A673 (cell line): ENCODE measurements at regions of chr12 and their contacts with region 1.

Region 1: DNA sequence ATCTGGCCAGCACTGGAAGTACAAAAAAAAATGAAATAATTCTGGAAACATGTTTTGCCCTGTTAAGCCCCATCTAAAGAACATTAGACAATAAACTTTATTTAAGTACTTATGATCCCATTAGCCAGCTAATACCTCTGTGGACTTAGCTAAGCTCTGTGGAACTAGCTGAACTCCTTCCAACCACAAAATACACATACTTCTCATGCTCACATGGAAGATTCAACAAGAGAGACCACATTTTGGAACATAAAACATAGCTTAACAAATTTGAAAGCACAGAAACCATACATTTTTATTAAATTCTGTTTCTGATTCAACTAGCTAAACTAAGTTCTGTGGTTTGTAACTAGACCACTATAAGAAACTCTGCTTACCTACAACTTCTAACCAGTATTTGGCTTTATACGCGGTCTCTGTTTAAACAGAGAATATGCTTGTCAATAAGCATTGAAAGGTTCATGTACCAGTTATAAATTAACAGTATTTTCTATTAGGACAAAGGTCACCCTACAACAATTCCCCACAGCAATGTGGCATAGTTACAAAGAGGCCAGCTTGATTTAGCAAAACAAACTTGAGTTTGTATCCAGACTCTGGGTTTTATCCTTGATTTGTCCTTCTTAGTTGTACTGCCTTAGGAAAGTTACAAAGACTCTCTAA is 300.1 kb downstream of the C12orf50 start:
- DNase-seq: no peak
- H3K4me3 ChIP-seq: no peak overlapping the region
- H3K27ac ChIP-seq: no peak overlapping the region
- H3K4me1 ChIP-seq: no peaks in the 10 kb centered on the region
- H3K27me3 ChIP-seq: no peaks in the 10 kb centered on the region
- CTCF ChIP-seq: no peak

Region 2: DNA sequence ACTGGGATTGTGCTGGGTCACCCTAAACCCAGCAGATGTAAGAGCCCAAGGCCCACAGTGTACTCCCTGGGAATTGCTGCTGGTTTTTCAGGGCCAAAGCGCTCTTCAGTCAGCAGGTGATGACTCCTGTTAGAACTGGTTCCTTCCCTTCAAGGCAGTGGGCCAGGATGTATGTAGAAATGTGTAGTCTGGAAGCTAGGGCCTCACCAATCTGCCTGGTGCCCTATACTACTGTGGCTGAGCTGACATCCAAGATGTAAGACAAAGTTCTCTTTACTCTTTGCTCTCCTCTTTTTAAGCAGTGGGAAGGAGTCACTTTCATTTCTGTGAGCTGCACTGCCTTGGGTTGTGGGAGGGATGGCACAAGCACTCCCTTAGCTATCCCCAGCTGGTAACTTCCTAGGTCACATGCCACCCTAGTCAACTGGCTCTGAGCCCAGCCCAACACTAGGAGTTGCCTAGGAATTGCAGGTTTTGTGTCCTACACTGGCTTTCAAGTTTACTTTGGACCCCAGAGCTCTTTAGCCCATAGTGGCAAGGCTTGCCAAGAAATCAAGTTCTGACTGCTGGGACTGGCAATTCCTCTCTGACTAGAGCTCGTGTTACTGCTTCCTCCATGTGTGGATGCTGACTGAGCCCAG is 50.9 kb after region 1 on chr12:
- CTCF ChIA-PET with region 1: no interaction called
- POLR2A ChIA-PET with region 1: no interaction called
- intact Hi-C with region 1: loop called (anchors 10 kb)
- DNase-seq: peak; percentile 10
- H3K4me3 ChIP-seq: no peak overlapping the region
- H3K27ac ChIP-seq: no peak overlapping the region
- H3K4me1 ChIP-seq: no peaks in the 10 kb centered on the region
- H3K27me3 ChIP-seq: no peaks in the 10 kb centered on the region
- CTCF ChIP-seq: no peak